Activated naive CD4-positive, alpha-beta T cell treated with anti-CD3 and anti-CD28 coated beads for 36 hours (primary cell): ENCODE measurements at regions of chrX and their contacts with region 1.

Region 1: GRCh38 chrX:69280933-69281332 is 115.7 kb upstream of the PJA1 start:
- DNase-seq: no peak
- H3K4me3 Mint-ChIP-seq: no peak overlapping the region
- H3K27ac Mint-ChIP-seq: no peak overlapping the region
- H3K4me1 Mint-ChIP-seq: no peaks in the 10 kb centered on the region
- H3K27me3 Mint-ChIP-seq: no peaks in the 10 kb centered on the region

Region 2: GRCh38 chrX:69229436-69229835 is 51.5 kb before region 1 on chrX:
- CTCF ChIA-PET with region 1: no interaction called
- intact Hi-C with region 1: loop called (anchors 5 kb)
- DNase-seq: no peak
- H3K4me3 Mint-ChIP-seq: no peak overlapping the region
- H3K27ac Mint-ChIP-seq: no peak overlapping the region
- H3K4me1 Mint-ChIP-seq: no peaks in the 10 kb centered on the region
- H3K27me3 Mint-ChIP-seq: peaks cover 2% of the 10 kb centered on the region